ENCODE measurements at regions of chr17 and their contacts with region 1.

Region 1: GRCh38 chr17:43576563-43577229 is 30.6 kb upstream of the ETV4 start:
- DNase-seq: peak; percentile 19 to 31
- ATAC-seq: peak; percentile 70 to 78
- H3K4me3 ChIP-seq: no peak overlapping the region
- H3K27ac ChIP-seq: no peak overlapping the region
- H3K4me1 ChIP-seq: peaks cover 12 to 26% of the 10 kb centered on the region in 2 donors
- H3K27me3 ChIP-seq: no peaks in the 10 kb centered on the region
- CTCF ChIP-seq: peak; percentile 83 to 95 (median 89)
- POLR2A ChIP-seq: no peak

Region 2: DNA sequence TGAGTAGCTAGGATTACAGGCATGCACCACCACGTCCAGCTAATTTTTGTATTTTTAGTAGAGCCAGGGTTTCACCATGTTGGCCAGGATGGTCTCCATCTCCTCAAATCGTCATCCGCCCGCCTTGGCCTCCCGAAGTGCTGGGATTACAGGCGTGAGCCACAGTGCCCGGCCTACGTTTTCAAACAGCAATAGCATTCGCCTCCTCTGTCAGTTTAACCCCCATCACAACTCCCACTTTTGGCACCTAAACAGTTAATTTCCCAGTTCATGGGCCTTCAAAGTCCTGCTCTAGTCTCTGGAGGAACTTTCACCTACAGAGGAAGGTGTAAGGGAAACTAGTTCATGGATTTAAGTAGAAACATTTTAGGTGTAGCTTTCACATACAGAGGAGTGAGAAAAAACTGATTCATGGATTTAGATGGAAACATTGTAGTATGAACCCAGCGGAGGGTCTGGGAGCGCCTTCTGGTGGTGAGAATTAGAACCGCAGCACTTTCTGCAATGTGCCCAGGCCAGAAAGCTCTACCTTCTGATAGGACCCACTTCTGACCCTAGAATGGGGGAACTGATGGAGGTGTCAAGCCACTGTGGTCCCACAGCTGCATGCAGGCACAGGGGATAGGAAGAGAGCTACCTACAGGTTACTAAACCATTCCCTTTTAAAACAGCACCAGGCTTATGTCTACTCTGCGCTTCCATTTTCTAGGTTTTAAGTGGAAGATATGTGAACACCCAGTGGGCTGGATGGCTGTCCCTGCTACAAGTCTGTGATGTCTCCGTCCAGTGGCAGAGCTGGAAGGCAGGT is 97.0 kb after region 1 on chr17:
- in situ Hi-C with region 1: loop called (anchors 5 kb)
- intact Hi-C with region 1: loop called (anchors 1 kb)
- DNase-seq: peak; percentile 19 to 51
- ATAC-seq: peak; percentile 37 to 59
- H3K4me3 ChIP-seq: no peak overlapping the region
- H3K27ac ChIP-seq: no peak overlapping the region
- H3K4me1 ChIP-seq: peaks cover 5 to 15% of the 10 kb centered on the region in 2 donors
- H3K27me3 ChIP-seq: no peaks in the 10 kb centered on the region
- CTCF ChIP-seq: peak; percentile 82 to 95 (median 88)
- POLR2A ChIP-seq: no peak

Region 3: DNA sequence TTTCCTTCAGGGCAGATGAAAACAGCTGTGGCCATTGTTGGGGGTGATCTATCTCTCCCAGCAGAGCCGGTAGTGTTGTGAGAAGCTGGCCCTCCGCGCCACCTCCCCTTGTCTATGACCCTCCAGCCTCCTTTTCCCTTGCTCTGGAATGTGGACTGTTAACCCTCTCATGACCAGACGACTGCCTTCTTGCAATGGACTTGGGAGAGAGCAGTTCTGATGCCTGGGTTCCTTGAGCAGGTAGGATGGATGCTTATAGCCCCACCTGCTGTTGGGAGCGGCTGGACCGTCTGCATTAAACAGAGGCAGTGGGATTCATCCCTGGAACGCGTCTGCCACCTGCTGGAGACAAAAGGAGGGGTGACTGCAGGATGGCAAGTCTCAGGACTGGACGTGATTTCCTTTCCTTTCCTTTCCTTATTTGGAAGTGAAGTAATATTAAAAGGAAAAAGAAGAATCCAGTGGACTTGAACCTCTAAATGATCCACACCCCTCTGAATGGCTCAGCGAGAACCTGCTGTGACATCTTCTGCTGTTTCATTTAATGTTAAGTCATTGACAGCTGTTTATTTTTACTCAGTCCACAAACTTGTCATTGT is 183.7 kb after region 1 on chr17:
- in situ Hi-C with region 1: loop called in 1 of 4 experiments (anchors 10 kb)
- intact Hi-C with region 1: loop called (anchors 2 kb)
- DNase-seq: peak; percentile 85 to 87
- ATAC-seq: peak; percentile 92 to 95
- H3K4me3 ChIP-seq: no peak overlapping the region
- H3K27ac ChIP-seq: no peak overlapping the region
- H3K4me1 ChIP-seq: peaks cover 0 to 2% of the 10 kb centered on the region in 2 donors
- H3K27me3 ChIP-seq: peaks cover 0 to 22% (median 16%) of the 10 kb centered on the region in 3 donors
- CTCF ChIP-seq: peak; percentile 97 to 99 (median 98)
- POLR2A ChIP-seq: no peak